Caco-2 (cell line): ENCODE measurements at regions of chr5 and their contacts with region 1.

Region 1: GRCh38 chr5:83718195-83718825 is 2.3 kb downstream of the HAPLN1 start:
- DNase-seq: peak; percentile 57 to 73
- H3K4me3 ChIP-seq: no peak overlapping the region
- H3K4me3 Mint-ChIP-seq: peak overlapping the region; percentile 6
- H3K27ac Mint-ChIP-seq: no peak overlapping the region
- H3K4me1 ChIP-seq: peaks cover 5% of the 10 kb centered on the region
- H3K4me1 Mint-ChIP-seq: peaks cover 29% of the 10 kb centered on the region
- H3K27me3 ChIP-seq: no peaks in the 10 kb centered on the region; the same call in none of the 2 replicates
- H3K27me3 Mint-ChIP-seq: peaks cover 11% of the 10 kb centered on the region
- CTCF ChIP-seq: peak; percentile 81 to 88

Region 2: GRCh38 chr5:83802686-83803085 is 84.4 kb after region 1 on chr5:
- CTCF ChIA-PET with region 1: no interaction called
- POLR2A ChIA-PET with region 1: no interaction called
- intact Hi-C with region 1: loop called (anchors 5 kb)
- DNase-seq: no peak
- H3K4me3 ChIP-seq: no peak overlapping the region
- H3K4me3 Mint-ChIP-seq: no peak overlapping the region
- H3K27ac Mint-ChIP-seq: no peak overlapping the region
- H3K4me1 ChIP-seq: peaks cover 10% of the 10 kb centered on the region
- H3K4me1 Mint-ChIP-seq: no peaks in the 10 kb centered on the region
- H3K27me3 ChIP-seq: no peaks in the 10 kb centered on the region
- H3K27me3 Mint-ChIP-seq: no peaks in the 10 kb centered on the region
- CTCF ChIP-seq: no peak

Region 3: DNA sequence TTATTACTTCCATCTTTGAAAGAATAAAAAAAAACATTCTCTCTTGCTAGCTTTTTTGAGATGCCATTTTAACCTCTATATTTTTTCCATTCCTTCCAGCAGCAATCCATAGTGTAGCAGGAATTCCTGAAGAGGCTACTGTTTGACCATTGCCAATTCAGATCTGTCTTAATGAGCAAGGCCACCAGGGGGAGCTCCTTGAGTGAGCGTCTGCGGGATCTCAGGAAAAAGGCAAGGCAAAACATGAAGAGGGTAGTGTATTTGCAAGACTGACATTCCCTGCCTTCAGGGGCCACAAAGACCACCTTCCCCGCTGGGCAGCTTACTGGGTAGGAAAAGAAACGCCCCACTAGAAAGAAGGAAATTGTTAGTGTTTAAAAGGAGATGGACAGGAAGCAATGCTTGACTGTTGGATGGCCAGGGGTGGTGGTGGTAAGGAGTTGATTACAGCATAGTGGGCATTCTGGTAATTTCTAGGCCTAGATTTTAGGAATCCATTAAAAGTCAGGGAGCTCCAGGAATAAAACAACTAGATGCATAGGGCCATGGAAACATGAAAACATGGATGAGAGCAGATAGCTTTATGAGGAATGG is 208.9 kb after region 1 on chr5:
- CTCF ChIA-PET with region 1: interaction called, 4 read pairs
- POLR2A ChIA-PET with region 1: no interaction called
- intact Hi-C with region 1: loop called (anchors 5 kb)
- DNase-seq: peak; percentile 70 to 80
- H3K4me3 ChIP-seq: no peak overlapping the region
- H3K4me3 Mint-ChIP-seq: no peak overlapping the region
- H3K27ac Mint-ChIP-seq: no peak overlapping the region
- H3K4me1 ChIP-seq: 0 out of 2 replicates have a peak, but pooled peaks cover 13% of the 10 kb centered on the region
- H3K4me1 Mint-ChIP-seq: peaks cover 13% of the 10 kb centered on the region
- H3K27me3 ChIP-seq: no peaks in the 10 kb centered on the region
- H3K27me3 Mint-ChIP-seq: no peaks in the 10 kb centered on the region
- CTCF ChIP-seq: peak; percentile 71 to 73

Region 4: DNA sequence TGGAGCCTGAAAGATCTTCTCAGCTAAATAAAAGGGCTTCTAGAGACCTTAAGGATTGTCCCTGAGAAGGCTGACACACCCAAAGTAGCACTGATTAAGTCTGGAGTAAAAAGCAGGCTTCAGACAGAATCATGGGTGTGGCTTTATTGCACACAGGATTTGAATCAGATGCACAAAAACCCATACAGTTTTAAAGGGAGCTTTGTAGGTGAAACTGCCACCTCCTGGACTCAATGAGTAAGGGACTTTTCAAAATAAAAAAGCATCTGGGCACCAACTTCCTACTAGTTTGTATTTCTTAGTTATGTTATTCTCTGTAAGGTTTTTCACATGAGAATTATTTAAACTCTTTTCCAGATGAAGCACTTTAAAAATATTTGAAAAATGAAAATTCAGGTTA is 537.0 kb after region 1 on chr5:
- CTCF ChIA-PET with region 1: interaction called, 4 read pairs
- POLR2A ChIA-PET with region 1: no interaction called
- intact Hi-C with region 1: loop called (anchors 1 kb)
- DNase-seq: peak in 1 of 2 experiments; percentile 11
- H3K4me3 ChIP-seq: no peak overlapping the region
- H3K4me3 Mint-ChIP-seq: no peak overlapping the region
- H3K27ac Mint-ChIP-seq: no peak overlapping the region
- H3K4me1 ChIP-seq: no peaks in the 10 kb centered on the region
- H3K4me1 Mint-ChIP-seq: no peaks in the 10 kb centered on the region
- H3K27me3 ChIP-seq: no peaks in the 10 kb centered on the region
- H3K27me3 Mint-ChIP-seq: no peaks in the 10 kb centered on the region
- CTCF ChIP-seq: peak; percentile 18 to 39

Region 5: DNA sequence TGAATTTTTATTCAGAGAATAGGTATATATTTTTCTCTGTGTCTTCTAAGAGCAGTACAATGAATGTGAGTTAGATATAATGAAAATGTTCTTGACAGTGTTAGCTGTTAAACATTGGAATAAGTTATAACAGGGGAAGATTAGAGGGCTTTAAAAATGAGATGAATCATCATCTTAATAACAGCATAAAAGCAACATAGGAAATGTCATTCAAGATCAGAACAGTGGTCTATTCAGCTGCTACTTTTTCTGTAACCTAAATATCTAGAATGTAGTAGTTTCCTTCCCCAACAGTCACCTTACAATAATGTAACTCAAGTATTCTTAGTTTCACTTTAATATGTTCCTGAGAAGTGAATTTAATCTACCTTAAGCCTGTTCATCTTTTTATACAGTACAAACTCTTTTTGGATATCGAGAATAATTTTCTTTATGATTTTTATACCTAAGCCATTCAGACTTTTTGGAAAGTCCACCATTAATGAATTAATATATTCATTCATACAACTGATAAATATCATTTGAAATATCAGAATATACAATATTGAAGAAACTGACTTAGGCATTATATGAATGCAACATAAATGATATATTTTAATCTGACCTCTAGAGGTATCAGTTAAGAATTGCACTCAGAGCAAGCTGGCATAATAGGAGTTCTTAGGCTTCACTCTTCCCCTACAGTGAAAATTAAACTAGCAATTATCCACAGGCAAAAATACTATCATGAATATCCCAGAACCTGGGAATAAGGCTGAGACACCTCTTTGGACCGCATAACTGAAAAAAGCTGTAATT is 732.5 kb after region 1 on chr5:
- CTCF ChIA-PET with region 1: no interaction called
- POLR2A ChIA-PET with region 1: no interaction called
- intact Hi-C with region 1: loop called (anchors 10 kb)
- DNase-seq: no peak
- H3K4me3 ChIP-seq: no peak overlapping the region
- H3K4me3 Mint-ChIP-seq: no peak overlapping the region
- H3K27ac Mint-ChIP-seq: no peak overlapping the region
- H3K4me1 ChIP-seq: no peaks in the 10 kb centered on the region
- H3K4me1 Mint-ChIP-seq: no peaks in the 10 kb centered on the region
- H3K27me3 ChIP-seq: no peaks in the 10 kb centered on the region
- H3K27me3 Mint-ChIP-seq: no peaks in the 10 kb centered on the region
- CTCF ChIP-seq: no peak